ENCODE measurements at regions of chr16 and their contacts with region 1.

Region 1: DNA sequence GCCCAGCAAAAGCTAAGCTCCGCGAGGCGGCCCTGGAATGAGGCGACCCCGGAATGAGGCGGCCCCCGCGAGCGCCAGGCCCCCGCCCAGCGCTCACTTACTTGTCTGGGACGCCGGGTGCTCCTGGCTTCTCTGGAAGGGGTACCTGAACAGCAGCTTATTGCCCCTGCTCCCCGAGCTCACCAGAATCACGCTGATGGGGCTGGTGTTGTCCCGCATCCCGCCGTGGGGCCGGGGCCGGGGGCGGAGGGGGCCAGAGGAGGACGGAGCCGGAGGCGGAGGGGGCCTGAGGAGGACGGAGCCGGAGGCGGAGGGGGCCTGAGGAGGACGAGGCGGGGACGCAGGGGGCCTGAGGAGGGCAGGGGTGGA is 440 bp downstream of the NPRL3 start:
- DNase-seq: peak; percentile 43
- ATAC-seq: peak; percentile 8
- H3K4me3 Mint-ChIP-seq: peak overlapping the region; percentile 78
- H3K27ac Mint-ChIP-seq: peak overlapping the region; percentile 81
- H3K4me1 Mint-ChIP-seq: peaks cover 24% of the 10 kb centered on the region
- H3K27me3 Mint-ChIP-seq: no peaks in the 10 kb centered on the region

Region 2: GRCh38 chr16:77807-78443 is 60.1 kb before region 1 on chr16 and contains the start of gene MPG:
- CTCF ChIA-PET with region 1: no interaction called
- POLR2A ChIA-PET with region 1: no interaction called
- intact Hi-C with region 1: loop called in 1 of 2 experiments (anchors 1 kb)
- DNase-seq: peak; percentile 91
- ATAC-seq: peak; percentile 87
- H3K4me3 Mint-ChIP-seq: peak within 1 kb of the TSS; percentile 87
- H3K27ac Mint-ChIP-seq: peak within 1 kb of the TSS; percentile 83
- H3K4me1 Mint-ChIP-seq: peaks cover 30% of the 10 kb centered on the region
- H3K27me3 Mint-ChIP-seq: peaks cover 10% of the 10 kb centered on the region
- total RNA-seq, gene MPG: 47.0 to 57.0 TPM

Region 3: DNA sequence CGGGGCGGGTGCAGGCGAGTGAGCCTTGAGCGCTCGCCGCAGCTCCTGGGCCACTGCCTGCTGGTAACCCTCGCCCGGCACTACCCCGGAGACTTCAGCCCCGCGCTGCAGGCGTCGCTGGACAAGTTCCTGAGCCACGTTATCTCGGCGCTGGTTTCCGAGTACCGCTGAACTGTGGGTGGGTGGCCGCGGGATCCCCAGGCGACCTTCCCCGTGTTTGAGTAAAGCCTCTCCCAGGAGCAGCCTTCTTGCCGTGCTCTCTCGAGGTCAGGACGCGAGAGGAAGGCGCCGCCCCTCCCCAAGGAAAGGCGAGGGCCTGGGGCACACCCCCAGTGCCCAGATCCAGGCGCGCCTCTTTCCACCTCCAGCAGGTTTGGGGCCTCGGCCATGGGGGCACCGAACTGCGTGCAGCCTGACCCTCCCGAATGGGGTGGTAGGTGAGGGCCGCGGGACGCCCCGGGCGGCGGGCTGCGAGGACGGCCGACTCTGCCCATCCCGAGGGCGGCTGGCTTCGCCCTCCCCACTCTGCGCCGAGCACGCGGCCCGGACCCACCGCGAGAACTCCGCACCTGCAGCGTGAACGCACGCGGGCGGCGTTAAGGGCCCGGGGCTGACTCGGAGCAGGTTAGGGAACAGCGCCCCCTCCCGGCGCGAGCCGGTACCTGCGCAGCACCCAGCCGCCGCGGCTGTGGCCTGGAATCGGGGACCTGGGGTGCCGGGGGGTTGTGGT is 43.1 kb after region 1 on chr16:
- CTCF ChIA-PET with region 1: interaction called, 3 read pairs
- POLR2A ChIA-PET with region 1: no interaction called
- intact Hi-C with region 1: loop called in 1 of 2 experiments (anchors 1 kb)
- DNase-seq: peak; percentile 94
- ATAC-seq: peak; percentile 88
- H3K4me3 Mint-ChIP-seq: peak overlapping the region; percentile 39
- H3K27ac Mint-ChIP-seq: no peak overlapping the region
- H3K4me1 Mint-ChIP-seq: peaks cover 3% of the 10 kb centered on the region
- H3K27me3 Mint-ChIP-seq: peaks cover 21% of the 10 kb centered on the region

Region 4: DNA sequence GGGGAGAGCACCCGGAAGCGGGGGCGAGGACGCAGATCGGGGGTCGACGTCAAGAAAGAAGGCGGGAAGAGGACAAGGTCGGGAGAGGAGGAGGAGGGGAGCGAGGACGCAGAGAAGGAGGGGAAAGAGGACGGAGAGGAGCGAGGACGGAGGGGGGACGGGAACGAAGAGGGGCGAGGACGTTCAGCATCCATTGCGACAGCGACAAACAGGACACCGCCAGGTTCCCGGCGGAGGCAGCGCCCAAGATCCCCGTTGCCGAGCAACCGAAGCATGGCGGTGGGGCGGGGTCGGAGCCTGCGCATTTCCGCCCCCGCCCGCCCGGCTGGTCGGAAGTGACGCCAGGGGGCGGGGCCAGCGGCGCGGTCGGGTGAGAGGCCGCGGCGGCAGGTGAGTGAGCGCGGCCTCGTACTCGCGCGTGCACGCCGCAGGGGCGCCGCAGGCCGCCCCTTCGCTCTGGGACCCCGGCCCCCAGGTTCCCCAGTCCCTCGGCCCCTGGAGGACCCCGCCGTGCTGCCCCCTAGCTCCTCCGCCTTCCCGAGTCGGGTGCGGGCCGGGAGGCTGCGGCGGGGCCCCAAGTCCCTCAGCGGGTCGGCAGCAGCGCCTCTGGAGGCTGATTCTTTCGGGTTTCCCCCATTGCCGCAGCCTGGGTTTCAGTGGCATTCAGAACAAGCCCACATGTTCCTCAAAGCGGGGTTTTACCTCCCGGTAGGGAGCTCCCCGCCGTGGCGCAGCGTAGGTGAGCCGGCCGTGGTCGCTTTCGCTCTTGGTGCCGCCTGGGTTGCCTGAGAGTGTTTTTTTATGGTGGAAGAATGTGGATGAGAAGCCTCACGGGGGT is 96.7 kb after region 1 on chr16 and contains the start of gene FAM234A:
- CTCF ChIA-PET with region 1: no interaction called
- POLR2A ChIA-PET with region 1: no interaction called
- intact Hi-C with region 1: loop called in 1 of 2 experiments (anchors 1 kb)
- DNase-seq: peak; percentile 98
- ATAC-seq: peak; percentile 91
- H3K4me3 Mint-ChIP-seq: peak within 1 kb of the TSS; percentile 90
- H3K27ac Mint-ChIP-seq: peak within 1 kb of the TSS; percentile 96
- H3K4me1 Mint-ChIP-seq: peaks cover 17% of the 10 kb centered on the region
- H3K27me3 Mint-ChIP-seq: no peaks in the 10 kb centered on the region
- total RNA-seq, gene FAM234A: 11.3 to 15.2 TPM

Region 5: DNA sequence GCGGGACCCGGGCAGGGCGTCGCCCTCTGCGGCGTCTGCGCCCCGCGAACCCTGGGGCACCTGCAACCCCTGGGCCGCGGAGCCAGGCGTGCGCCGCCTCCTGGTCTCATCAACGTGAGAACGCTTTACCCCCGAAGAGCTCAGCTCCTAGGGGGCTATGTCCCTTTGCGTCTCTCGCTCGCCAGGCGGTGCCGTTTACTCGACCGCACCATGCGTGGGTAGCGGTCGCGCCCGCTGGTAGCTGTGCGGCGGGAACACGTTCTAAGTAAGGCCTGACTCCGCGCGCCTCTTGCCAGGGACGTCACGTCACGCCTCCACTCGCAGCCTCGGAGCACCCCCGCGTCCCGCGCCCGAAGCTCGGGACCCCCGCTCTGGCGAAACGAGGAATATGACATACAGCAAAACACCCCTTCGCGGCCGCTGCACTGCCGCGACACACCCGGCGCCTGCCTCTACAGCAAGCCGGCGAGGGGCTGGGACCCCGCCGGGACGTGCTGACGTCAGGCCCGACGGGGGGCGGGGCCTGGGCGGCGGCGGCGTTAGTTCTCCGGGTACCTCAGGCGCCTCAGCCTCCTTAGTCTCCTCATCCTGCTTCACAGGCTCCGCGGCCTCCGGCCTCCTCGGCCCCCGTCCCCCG is 287.2 kb after region 1 on chr16 and contains the start of gene RAB11FIP3:
- CTCF ChIA-PET with region 1: no interaction called
- POLR2A ChIA-PET with region 1: no interaction called
- intact Hi-C with region 1: loop called in 1 of 2 experiments (anchors 1 kb)
- DNase-seq: peak; percentile 90
- ATAC-seq: peak; percentile 93
- H3K4me3 Mint-ChIP-seq: peak within 1 kb of the TSS; percentile 74
- H3K27ac Mint-ChIP-seq: peak within 1 kb of the TSS; percentile 47
- H3K4me1 Mint-ChIP-seq: peaks cover 30% of the 10 kb centered on the region
- H3K27me3 Mint-ChIP-seq: peaks cover 5% of the 10 kb centered on the region
- total RNA-seq, gene RAB11FIP3: 14.2 to 17.0 TPM

Region 6: GRCh38 chr16:867461-868385 is 729.7 kb after region 1 on chr16:
- CTCF ChIA-PET with region 1: no interaction called
- POLR2A ChIA-PET with region 1: no interaction called
- intact Hi-C with region 1: no loop called
- DNase-seq: no peak
- ATAC-seq: no peak
- H3K4me3 Mint-ChIP-seq: no peak overlapping the region
- H3K27ac Mint-ChIP-seq: no peak overlapping the region
- H3K4me1 Mint-ChIP-seq: no peaks in the 10 kb centered on the region
- H3K27me3 Mint-ChIP-seq: no peaks in the 10 kb centered on the region

Measured in activated CD4-positive, alpha-beta T cell treated with anti-CD3 and anti-CD28 coated beads for 36 hours (primary cell).